HEK293 (cell line): ENCODE measurements at regions of chr19 and their contacts with region 1.

Region 1: GRCh38 chr19:1269065-1269477 is at the start of gene CIRBP:
- H3K4me3 ChIP-seq: peak within 1 kb of the TSS; percentile 44
- H3K27ac ChIP-seq: peak within 1 kb of the TSS; percentile 99
- H3K4me1 ChIP-seq: peaks cover 20% of the 10 kb centered on the region
- CTCF ChIP-seq: no peak

Region 2: DNA sequence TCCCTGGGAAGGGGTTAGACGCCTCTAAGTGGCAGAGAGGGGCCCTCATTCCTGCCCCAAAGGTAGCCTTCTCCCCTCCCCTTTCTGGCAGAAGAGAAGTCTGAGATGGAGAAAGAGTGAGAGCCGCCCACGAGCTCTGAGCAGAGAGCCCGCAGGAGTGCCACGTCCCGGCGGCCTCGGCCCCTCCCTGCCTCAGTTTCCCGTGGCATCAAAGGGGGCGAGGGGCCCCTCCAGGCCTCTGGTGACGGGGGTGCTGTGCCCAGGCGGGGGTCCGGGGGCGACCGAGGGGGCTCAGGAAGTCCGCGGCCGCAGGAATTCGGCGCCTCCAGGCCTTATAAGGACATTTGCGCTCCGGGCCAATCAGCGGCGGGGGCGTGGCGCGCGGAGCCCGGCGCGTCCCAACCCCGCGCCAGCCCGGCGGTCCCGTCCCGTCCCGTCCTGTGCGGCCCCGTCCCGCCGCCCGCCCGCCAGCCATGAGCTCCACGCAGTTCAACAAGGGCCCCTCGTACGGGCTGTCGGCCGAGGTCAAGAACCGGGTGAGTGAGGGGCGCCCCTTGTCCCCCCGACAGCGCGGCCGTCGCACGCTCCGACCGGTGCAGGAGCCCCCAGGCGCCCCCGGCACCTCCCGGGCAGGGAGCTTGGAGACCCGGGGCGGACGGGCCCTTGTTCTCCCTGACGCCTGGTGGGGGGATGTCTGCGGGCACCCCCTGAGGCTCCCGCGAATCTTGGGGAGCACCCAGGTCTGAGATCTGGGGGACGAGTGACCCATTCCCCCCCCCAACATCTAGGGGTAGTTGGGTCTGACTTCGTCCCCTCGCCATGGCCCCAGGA is 242.7 kb before region 1 on chr19 and contains the start of gene CNN2:
- CTCF ChIA-PET with region 1: no interaction called
- POLR2A ChIA-PET with region 1: interaction called, 13 read pairs
- H3K4me3 ChIP-seq: peak within 1 kb of the TSS; percentile 55
- H3K27ac ChIP-seq: peak within 1 kb of the TSS; percentile 47
- H3K4me1 ChIP-seq: peaks cover 5% of the 10 kb centered on the region; the same call in 1 of the 2 replicates
- CTCF ChIP-seq: no peak

Region 3: DNA sequence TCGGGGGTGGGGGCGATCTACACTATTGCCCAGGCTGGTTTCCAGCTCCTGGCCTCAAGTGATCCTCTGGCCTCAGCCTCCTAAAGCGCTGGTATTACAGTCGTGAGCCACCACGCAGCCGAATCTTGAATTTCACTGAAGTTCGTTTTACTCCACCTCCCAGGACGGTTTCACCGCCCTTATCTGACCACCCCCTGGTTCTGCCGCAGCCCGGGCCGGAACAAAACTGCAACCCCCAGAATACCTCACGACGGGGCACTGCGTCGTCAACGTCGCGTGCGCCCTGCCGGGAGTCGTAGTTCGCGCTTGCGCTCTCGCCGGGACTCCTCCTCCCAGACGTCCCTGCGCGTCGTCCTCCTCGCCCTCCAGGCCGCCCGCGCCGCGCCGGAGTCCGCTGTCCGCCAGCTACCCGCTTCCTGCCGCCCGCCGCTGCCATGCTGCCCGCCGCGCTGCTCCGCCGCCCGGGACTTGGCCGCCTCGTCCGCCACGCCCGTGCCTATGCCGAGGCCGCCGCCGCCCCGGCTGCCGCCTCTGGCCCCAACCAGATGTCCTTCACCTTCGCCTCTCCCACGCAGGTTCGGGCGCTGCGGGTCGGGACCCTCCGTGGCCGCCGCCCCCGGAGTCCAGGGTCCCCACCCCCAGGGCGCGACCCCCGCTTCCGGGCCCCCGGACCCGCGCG is 27.5 kb before region 1 on chr19 and contains the start of gene ATP5F1D:
- CTCF ChIA-PET with region 1: interaction called, 299 read pairs
- POLR2A ChIA-PET with region 1: interaction called, 231 read pairs
- H3K4me3 ChIP-seq: peak within 1 kb of the TSS; percentile 75
- H3K27ac ChIP-seq: peak within 1 kb of the TSS; percentile 63
- H3K4me1 ChIP-seq: peaks cover 8% of the 10 kb centered on the region
- CTCF ChIP-seq: 0 out of 2 replicates have a peak, but pooled peaks have one; percentile 16

Region 4: DNA sequence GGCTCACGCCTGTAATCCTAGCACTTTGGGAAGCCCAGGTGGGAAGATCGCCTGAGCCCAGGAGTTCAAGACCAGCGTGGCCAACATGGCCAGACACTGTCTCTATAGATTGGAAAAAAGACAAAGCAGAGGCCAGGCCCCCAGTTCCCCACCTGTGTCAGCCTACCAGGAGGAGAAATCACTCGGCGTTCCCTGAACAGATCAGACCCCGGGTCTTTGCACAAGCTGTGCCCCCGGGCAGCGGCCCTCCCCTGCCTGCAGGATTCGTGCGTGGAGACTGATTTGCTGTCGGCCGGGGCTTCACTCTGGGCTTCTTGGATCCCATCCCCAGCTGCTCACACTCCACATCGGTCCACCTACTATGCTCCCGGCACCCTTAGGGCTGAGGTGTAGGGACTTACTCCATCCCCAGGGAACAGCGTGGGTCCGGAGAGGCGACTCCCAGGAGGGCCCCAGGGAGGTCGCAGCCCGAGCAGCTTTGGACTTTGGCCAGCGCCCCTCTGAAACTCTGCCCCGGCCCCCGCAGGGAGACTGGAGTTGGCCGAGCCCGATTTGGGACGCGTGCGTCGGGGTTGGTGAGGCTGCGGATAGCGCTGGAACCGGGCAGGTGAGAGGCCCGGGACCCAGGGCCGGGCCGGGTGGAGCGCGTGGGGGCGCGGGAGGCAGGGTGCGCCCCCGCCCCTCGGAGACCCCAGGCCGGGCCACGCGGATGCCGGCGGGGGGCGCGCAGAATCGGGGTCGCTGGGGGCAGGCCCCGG is 16.1 kb after region 1 on chr19:
- CTCF ChIA-PET with region 1: interaction called, 7 read pairs
- POLR2A ChIA-PET with region 1: interaction called, 26 read pairs
- H3K4me3 ChIP-seq: no peak overlapping the region
- H3K27ac ChIP-seq: no peak overlapping the region
- H3K4me1 ChIP-seq: peaks cover 5% of the 10 kb centered on the region
- CTCF ChIP-seq: no peak

Region 5: DNA sequence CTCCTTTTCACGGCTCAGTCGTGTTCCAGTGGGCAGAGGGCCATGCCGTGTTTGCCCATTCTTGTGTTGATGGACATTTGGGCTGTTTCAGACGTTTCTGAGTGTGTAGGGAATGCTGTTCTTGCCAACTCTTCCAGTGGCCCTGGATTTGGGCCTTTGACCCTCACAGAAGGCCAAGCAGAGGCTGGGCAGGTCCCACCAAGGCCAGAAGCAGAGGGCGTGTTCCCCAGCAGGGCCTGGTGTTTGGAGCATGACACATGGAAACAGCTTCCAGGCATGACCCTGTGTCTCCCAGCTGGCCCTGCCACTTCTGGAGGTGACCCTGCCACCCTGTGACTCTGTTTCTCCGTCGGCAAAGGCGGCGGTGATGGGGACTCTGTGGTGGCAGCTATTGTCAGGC is 52.5 kb after region 1 on chr19:
- CTCF ChIA-PET with region 1: no interaction called
- POLR2A ChIA-PET with region 1: no interaction called
- H3K4me3 ChIP-seq: no peak overlapping the region
- H3K27ac ChIP-seq: no peak overlapping the region
- H3K4me1 ChIP-seq: peaks cover 5% of the 10 kb centered on the region; the same call in 1 of the 2 replicates
- CTCF ChIP-seq: no peak

Region 6: GRCh38 chr19:1354977-1355567 is 86.0 kb after region 1 on chr19:
- CTCF ChIA-PET with region 1: no interaction called
- POLR2A ChIA-PET with region 1: interaction called, 10 read pairs
- H3K4me3 ChIP-seq: peak overlapping the region; percentile 77
- H3K27ac ChIP-seq: peak overlapping the region; percentile 66; the same call in 1 of the 2 replicates
- H3K4me1 ChIP-seq: peaks cover 10% of the 10 kb centered on the region
- CTCF ChIP-seq: no peak